Naive thymus-derived CD4-positive, alpha-beta T cell (primary cell): ENCODE measurements at regions of chr19 and their contacts with region 1.

Region 1: GRCh38 chr19:52269338-52270261 is at the start of gene ZNF766:
- DNase-seq: peak; percentile 94 to 97 (median 96)
- ATAC-seq: peak; percentile 100
- H3K4me3 ChIP-seq: peak within 1 kb of the TSS; percentile 94
- H3K4me3 Mint-ChIP-seq: peak within 1 kb of the TSS; percentile 94 to 100 (median 96)
- H3K27ac ChIP-seq: peak within 1 kb of the TSS; percentile 93
- H3K27ac Mint-ChIP-seq: peak within 1 kb of the TSS; percentile 87 to 97 (median 95)
- H3K4me1 ChIP-seq: peaks cover 15 to 16% of the 10 kb centered on the region in 2 donors
- H3K4me1 Mint-ChIP-seq: peaks cover 20 to 53% (median 45%) of the 10 kb centered on the region in 7 donors
- H3K27me3 ChIP-seq: no peaks in the 10 kb centered on the region
- H3K27me3 Mint-ChIP-seq: no peaks in the 10 kb centered on the region
- total RNA-seq, gene ZNF766: 24.7 to 59.6 (median 41.4) TPM

Region 2: DNA sequence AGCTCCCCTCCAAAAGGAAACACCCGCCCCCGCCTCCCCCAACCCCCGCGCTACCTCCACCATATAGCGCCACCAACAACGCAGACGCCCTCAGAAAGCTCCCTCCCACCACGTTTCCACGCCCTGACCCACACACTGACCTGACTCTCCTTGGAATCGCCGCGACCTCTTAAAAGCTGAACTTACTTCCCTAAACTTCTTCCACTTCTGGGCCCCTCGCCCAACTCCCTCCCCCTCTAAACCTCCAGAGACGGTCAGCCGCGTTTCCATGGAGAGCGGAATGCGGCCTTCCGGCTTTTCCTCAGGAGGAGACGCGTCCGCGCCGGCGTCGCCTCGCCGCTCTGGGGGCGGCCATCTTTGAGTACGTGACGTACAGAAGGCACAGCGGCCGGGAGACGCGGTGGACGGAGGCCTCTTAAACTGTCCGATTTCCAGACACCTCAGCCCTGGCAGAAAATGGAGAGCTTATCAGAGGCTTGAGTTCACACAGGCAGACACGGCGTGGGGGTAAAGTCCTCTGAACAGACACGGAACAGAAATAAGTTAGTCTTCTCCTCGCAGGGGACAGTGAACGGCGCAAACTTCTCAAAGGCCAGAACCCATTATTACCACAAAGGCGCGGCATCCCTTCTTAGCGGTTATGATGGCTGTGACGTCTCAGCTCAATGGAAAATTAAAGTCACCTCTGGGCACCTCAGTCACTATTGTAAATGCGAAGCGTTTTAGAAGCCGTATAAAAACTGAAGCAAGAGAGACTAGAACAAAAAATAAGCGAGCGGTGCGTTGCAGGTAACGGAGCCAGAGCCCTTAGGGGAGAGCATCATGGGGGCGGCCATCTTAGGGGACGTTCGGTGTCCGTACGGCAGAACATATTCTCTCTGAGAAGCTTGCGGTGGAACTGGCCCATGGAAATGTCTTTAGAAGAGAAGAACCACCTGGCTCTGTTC is 220.8 kb before region 1 on chr19 and contains the start of gene ZNF432:
- CTCF ChIA-PET with region 1: no interaction called
- POLR2A ChIA-PET with region 1: no interaction called
- intact Hi-C with region 1: loop called in 1 of 2 experiments (anchors 1 kb)
- DNase-seq: peak; percentile 75 to 87 (median 82)
- ATAC-seq: peak; percentile 92
- H3K4me3 ChIP-seq: peak within 1 kb of the TSS; percentile 78
- H3K4me3 Mint-ChIP-seq: peak within 1 kb of the TSS; percentile 95 to 100 (median 98)
- H3K27ac ChIP-seq: peak within 1 kb of the TSS; percentile 97
- H3K27ac Mint-ChIP-seq: peak within 1 kb of the TSS; percentile 97 to 99 (median 99)
- H3K4me1 ChIP-seq: peaks cover 0 to 7% of the 10 kb centered on the region in 2 donors
- H3K4me1 Mint-ChIP-seq: peaks cover 10 to 43% (median 25%) of the 10 kb centered on the region in 7 donors
- H3K27me3 ChIP-seq: no peaks in the 10 kb centered on the region
- H3K27me3 Mint-ChIP-seq: no peaks in the 10 kb centered on the region
- total RNA-seq, gene ZNF432: 13.2 to 25.0 (median 18.1) TPM

Region 3: DNA sequence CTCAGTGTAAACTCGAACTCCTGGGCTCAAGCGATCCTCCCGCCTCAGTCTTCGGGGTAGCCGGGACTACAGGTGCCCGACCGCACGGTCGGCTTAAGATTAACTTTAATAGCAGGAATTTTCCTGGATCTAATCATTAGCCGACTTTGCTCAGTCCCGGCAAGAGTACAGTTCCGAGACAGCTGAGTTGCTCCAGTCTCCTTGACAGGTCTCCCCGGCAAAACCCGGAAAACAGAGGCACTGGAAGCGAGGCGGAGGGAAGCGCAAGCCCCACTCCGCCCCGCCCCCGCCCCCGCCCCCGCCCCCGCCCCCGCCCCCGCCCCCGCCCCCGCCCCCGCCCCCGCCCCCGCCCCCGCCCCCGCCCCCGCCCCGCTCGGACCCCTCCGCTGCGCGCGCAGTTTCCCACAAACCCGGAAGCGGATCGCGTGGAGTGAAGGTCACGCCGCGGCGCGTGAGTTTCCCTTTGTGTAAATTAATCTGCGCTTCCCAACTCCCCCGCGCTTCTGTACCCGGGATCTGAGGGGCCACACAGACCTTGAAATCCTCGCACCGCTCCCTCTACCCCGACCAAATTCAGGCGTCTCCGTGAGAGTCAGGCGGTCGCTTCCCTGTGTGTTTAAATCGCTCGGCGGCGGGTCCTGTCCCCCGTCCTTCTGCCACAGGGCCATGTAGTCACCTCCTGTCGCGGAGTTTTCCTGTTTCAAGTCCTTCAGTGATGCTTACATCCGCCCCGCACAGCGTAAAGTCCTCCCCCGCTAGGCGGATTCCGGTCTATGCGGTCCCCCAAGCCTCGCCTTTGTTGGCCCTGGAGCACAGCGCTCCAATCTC is 27.4 kb after region 1 on chr19 and contains the start of gene ZNF480:
- CTCF ChIA-PET with region 1: no interaction called
- POLR2A ChIA-PET with region 1: interaction called, 4 read pairs
- intact Hi-C with region 1: loop called (anchors 1 kb)
- DNase-seq: peak; percentile 67 to 91 (median 87)
- ATAC-seq: peak; percentile 89
- H3K4me3 ChIP-seq: peak within 1 kb of the TSS; percentile 85
- H3K4me3 Mint-ChIP-seq: peak within 1 kb of the TSS; percentile 89 to 99 (median 98)
- H3K27ac ChIP-seq: peak within 1 kb of the TSS; percentile 97
- H3K27ac Mint-ChIP-seq: peak within 1 kb of the TSS; percentile 95 to 99 (median 98)
- H3K4me1 ChIP-seq: peaks cover 4 to 5% of the 10 kb centered on the region in 2 donors
- H3K4me1 Mint-ChIP-seq: peaks cover 15 to 32% (median 19%) of the 10 kb centered on the region in 7 donors
- H3K27me3 ChIP-seq: no peaks in the 10 kb centered on the region
- H3K27me3 Mint-ChIP-seq: peaks cover 0 to 3% (median 0%) of the 10 kb centered on the region in 5 donors
- total RNA-seq, gene ZNF480: 8.5 to 28.9 (median 13.3) TPM

Region 4: GRCh38 chr19:52453324-52454094 is 183.9 kb after region 1 on chr19 and contains the start of gene ZNF578:
- CTCF ChIA-PET with region 1: no interaction called
- POLR2A ChIA-PET with region 1: interaction called, 5 read pairs
- intact Hi-C with region 1: loop called in 1 of 2 experiments (anchors 1 kb)
- DNase-seq: peak; percentile 18 to 78 (median 59)
- ATAC-seq: peak; percentile 81
- H3K4me3 ChIP-seq: peak within 1 kb of the TSS; percentile 56
- H3K4me3 Mint-ChIP-seq: peak within 1 kb of the TSS; percentile 72 to 93 (median 89)
- H3K27ac ChIP-seq: no peak within 1 kb of the TSS
- H3K27ac Mint-ChIP-seq: peak within 1 kb of the TSS in 8 of 9 donors; percentile 47 to 83 (median 66)
- H3K4me1 ChIP-seq: peaks cover 0 to 7% of the 10 kb centered on the region in 2 donors
- H3K4me1 Mint-ChIP-seq: peaks cover 3 to 35% (median 21%) of the 10 kb centered on the region in 7 donors
- H3K27me3 ChIP-seq: no peaks in the 10 kb centered on the region
- H3K27me3 Mint-ChIP-seq: peaks cover 0 to 21% (median 16%) of the 10 kb centered on the region in 5 donors
- total RNA-seq, gene ZNF578: 0.75 to 3.9 (median 1.5) TPM

Region 5: GRCh38 chr19:52637718-52638585 is 368.4 kb after region 1 on chr19 and contains the start of gene ZNF83:
- CTCF ChIA-PET with region 1: no interaction called
- POLR2A ChIA-PET with region 1: no interaction called
- intact Hi-C with region 1: loop called in 1 of 2 experiments (anchors 1 kb)
- DNase-seq: peak; percentile 81 to 97 (median 92)
- ATAC-seq: peak; percentile 99
- H3K4me3 ChIP-seq: peak within 1 kb of the TSS; percentile 86
- H3K4me3 Mint-ChIP-seq: peak within 1 kb of the TSS; percentile 92 to 98 (median 95)
- H3K27ac ChIP-seq: peak within 1 kb of the TSS; percentile 99
- H3K27ac Mint-ChIP-seq: peak within 1 kb of the TSS; percentile 94 to 98 (median 97)
- H3K4me1 ChIP-seq: peaks cover 7 to 8% of the 10 kb centered on the region in 2 donors
- H3K4me1 Mint-ChIP-seq: peaks cover 11 to 27% (median 20%) of the 10 kb centered on the region in 7 donors
- H3K27me3 ChIP-seq: no peaks in the 10 kb centered on the region
- H3K27me3 Mint-ChIP-seq: no peaks in the 10 kb centered on the region
- total RNA-seq, gene ZNF83: 49.7 to 113 (median 70.5) TPM

Region 6: DNA sequence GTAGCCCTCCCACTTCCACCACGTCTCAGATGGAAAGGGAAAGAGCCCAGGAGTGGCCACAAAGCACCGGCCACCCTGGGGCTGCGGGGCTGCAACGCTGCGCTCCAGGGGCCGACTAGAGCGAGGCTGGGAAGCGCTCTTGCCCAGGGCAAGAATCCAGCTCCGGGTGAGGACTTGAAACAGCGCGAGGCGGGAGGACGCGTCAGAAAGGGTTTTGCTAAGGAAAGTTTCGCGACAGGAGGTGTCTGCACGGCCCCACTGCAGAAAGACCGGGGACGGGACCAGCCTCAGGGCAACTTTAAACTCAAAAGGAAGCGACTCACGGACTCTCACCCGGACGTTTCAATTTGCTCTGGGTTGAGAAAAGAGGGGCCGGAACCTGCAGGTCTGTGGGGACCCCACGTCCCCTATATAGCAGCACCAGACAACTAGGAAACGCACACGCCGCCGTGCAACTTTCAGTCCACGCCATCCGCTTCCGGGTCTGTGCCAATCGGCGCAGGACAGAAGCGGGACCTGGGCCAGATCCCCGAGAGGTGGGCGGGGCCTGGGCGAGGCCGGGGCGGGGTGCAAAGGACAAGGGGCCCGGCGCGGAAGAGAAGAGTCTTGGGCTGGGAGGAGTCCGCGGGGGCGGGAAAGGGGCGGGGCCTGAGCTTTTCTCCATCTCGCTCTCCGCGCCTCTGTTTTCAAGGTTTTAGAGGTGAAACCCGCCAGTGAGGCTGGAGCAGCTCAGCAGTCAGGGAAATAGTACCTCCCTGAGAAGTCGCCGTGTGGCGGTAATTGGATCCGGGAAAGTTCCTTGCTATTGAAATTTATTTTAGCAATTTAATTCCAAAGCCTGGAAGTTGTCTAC is 693.0 kb after region 1 on chr19 and contains the start of gene ZNF816:
- CTCF ChIA-PET with region 1: no interaction called
- POLR2A ChIA-PET with region 1: interaction called, 3 read pairs
- intact Hi-C with region 1: loop called in 1 of 2 experiments (anchors 10 kb)
- DNase-seq: peak; percentile 94 to 99 (median 98)
- ATAC-seq: peak; percentile 100
- H3K4me3 ChIP-seq: peak within 1 kb of the TSS; percentile 77
- H3K4me3 Mint-ChIP-seq: peak within 1 kb of the TSS; percentile 87 to 96 (median 94)
- H3K27ac ChIP-seq: peak within 1 kb of the TSS; percentile 73
- H3K27ac Mint-ChIP-seq: peak within 1 kb of the TSS; percentile 82 to 95 (median 93)
- H3K4me1 ChIP-seq: peaks cover 12 to 14% of the 10 kb centered on the region in 2 donors
- H3K4me1 Mint-ChIP-seq: peaks cover 15 to 33% (median 29%) of the 10 kb centered on the region in 7 donors
- H3K27me3 ChIP-seq: no peaks in the 10 kb centered on the region
- H3K27me3 Mint-ChIP-seq: no peaks in the 10 kb centered on the region
- total RNA-seq, gene ZNF816: 5.0 to 25.7 (median 11.0) TPM